ENCODE measurements at regions of chr2 and their contacts with region 1.

Region 1: GRCh38 chr2:240143801-240144648 is 3.6 kb upstream of the OTOS start:
- DNase-seq: peak; percentile 63 to 79 (median 74)
- ATAC-seq: peak; percentile 82
- H3K4me3 ChIP-seq: no peak overlapping the region
- H3K27ac ChIP-seq: no peak overlapping the region
- H3K4me1 ChIP-seq: peaks cover 7% of the 10 kb centered on the region
- H3K27me3 ChIP-seq: no peaks in the 10 kb centered on the region
- CTCF ChIP-seq: peak; percentile 82 to 96 (median 88)
- POLR2A ChIP-seq: no peak

Region 2: GRCh38 chr2:239035361-239036078 is 1108.5 kb before region 1 on chr2:
- intact Hi-C with region 1: loop called (anchors 5 kb)
- DNase-seq: peak; percentile 15 to 58 (median 45)
- ATAC-seq: peak; percentile 68
- H3K4me3 ChIP-seq: no peak overlapping the region
- H3K27ac ChIP-seq: no peak overlapping the region
- H3K4me1 ChIP-seq: no peaks in the 10 kb centered on the region
- H3K27me3 ChIP-seq: no peaks in the 10 kb centered on the region
- CTCF ChIP-seq: peak; percentile 47 to 94 (median 64)
- POLR2A ChIP-seq: no peak

Region 3: DNA sequence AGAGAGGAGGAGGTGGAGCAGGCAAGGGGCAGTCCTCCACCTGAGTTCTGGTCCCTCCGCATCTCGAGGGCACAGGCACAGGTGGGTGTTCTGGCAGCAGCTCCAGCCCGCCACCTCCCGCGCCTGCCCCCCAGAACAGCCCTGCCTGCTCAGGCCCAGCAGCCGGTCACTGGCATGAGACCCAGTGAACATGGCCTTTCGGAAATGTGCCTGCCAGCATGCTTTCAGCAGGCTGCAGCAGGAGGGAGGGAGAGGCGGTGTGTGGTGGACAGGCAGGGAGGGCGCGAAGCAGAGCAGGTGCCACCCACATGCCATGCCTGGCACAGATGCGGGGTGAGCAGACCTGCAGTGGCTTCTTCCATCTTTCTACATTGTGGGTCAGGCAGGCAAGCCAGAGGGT is 87.3 kb before region 1 on chr2:
- intact Hi-C with region 1: loop called (anchors 5 kb)
- DNase-seq: no peak
- ATAC-seq: no peak
- H3K4me3 ChIP-seq: no peak overlapping the region
- H3K27ac ChIP-seq: no peak overlapping the region
- H3K4me1 ChIP-seq: no peaks in the 10 kb centered on the region
- H3K27me3 ChIP-seq: no peaks in the 10 kb centered on the region
- CTCF ChIP-seq: no peak
- POLR2A ChIP-seq: no peak

Region 4: DNA sequence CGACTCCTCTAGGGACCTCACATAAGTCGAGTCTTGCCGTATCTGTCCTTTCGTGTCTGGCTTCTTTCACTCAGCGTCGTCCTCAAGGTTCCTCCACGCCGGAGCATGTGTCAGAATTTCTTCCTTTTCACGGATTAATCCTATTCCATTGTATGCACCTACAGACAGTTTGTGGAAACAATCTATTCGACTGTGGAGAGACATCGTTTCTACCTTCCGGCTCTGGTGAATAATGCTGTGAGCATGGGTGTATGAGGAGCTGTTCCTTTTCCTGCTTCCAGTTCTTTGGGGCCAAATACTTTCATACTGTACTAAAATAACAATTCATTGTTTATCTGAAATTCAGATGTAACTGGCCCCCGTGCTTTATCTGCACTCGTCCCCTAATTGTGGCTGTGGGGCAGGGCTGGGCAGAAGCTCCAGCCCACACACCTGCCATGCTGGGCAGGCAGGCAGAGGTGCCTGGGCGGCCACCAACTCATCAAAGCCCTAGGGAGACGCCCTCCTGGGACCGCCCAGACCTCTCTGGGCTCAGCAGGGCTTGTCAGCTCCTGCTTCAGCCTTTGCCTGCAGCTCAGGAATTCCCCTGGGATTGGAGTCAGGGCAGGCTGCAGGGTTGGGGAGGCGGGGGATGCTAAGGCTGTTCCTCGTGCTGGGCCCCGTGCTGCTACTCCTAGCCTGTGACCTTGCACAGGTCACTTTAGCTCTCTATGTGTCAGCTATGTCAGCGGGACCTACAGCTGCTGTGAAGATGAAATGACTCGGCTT is 305.9 kb after region 1 on chr2:
- intact Hi-C with region 1: loop called (anchors 10 kb)
- DNase-seq: no peak
- ATAC-seq: no peak
- H3K4me3 ChIP-seq: no peak overlapping the region
- H3K27ac ChIP-seq: no peak overlapping the region
- H3K4me1 ChIP-seq: peaks cover 21% of the 10 kb centered on the region
- H3K27me3 ChIP-seq: no peaks in the 10 kb centered on the region
- CTCF ChIP-seq: no peak
- POLR2A ChIP-seq: no peak

Measured in body of pancreas (tissue), 4 donors.